CD4-positive, alpha-beta memory T cell (primary cell): ENCODE measurements at regions of chr9 and their contacts with region 1.

Region 1: DNA sequence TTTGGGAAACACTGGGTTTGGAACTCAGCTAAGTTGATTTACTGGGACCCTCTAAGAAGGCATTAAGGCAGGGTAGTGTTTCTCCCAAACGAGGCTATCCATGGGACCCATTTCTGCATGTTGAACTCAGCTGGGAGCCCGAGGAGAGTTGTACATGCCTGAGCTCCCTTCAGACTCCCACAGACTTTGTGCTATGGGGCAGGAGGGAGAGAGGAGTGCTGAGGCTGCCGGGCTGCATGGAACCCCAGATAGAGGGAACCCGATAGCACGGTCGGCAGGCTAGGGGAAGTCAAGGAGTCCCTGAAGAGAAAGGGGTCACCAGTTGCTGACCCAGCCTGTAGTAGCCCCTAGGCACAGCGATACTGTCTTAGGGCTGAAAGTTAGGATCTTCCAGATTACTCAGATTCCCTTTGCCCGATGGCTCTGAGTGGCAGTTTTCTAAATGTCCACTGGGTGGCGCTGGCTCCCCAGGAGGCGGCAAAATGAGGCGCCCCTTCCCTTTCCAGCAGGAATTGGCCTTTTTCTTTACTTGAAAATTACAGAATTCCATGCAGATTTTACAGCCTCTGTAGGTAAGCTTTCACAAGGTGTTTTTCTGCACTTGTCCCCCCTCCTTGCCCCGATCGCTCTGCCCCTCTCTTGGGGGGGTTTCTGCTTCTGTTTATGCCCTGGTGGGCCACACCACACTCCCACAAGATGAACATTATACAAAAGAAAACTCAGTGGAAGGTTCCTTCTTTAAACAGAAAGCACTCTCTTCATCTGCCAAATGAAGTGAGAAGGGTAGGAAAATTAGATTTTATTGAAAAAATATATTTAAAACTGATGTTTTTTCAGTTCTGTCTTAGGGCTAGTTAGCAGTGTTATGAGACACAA is 17.8 kb downstream of the NANS start:
- DNase-seq: peak; percentile 60 to 72 (median 62)
- H3K4me3 ChIP-seq: no peak overlapping the region
- H3K4me3 Mint-ChIP-seq: peak overlapping the region; percentile 52 to 89 (median 71)
- H3K27ac ChIP-seq: peak overlapping the region; percentile 67
- H3K27ac Mint-ChIP-seq: peak overlapping the region; percentile 92 to 98 (median 96)
- H3K4me1 ChIP-seq: peaks cover 31% of the 10 kb centered on the region
- H3K4me1 Mint-ChIP-seq: peaks cover 24 to 43% (median 29%) of the 10 kb centered on the region in 4 donors
- H3K27me3 ChIP-seq: no peaks in the 10 kb centered on the region
- H3K27me3 Mint-ChIP-seq: no peaks in the 10 kb centered on the region

Region 2: GRCh38 chr9:98095431-98095830 is 21.1 kb after region 1 on chr9:
- CTCF ChIA-PET with region 1: interaction called, 23 read pairs
- POLR2A ChIA-PET with region 1: interaction called, 7 read pairs
- intact Hi-C with region 1: no loop called
- DNase-seq: no peak
- H3K4me3 ChIP-seq: no peak overlapping the region
- H3K4me3 Mint-ChIP-seq: peak overlapping the region in 2 of 8 donors; percentile 17 to 52
- H3K27ac ChIP-seq: no peak overlapping the region
- H3K27ac Mint-ChIP-seq: peak overlapping the region in 6 of 7 donors; percentile 41 to 91 (median 80)
- H3K4me1 ChIP-seq: peaks cover 67% of the 10 kb centered on the region
- H3K4me1 Mint-ChIP-seq: peaks cover 46 to 82% (median 66%) of the 10 kb centered on the region in 4 donors
- H3K27me3 ChIP-seq: no peaks in the 10 kb centered on the region
- H3K27me3 Mint-ChIP-seq: no peaks in the 10 kb centered on the region

Region 3: GRCh38 chr9:98118640-98119601 is 44.6 kb after region 1 on chr9 and contains the start of gene TRIM14:
- CTCF ChIA-PET with region 1: interaction called, 54 read pairs
- POLR2A ChIA-PET with region 1: interaction called, 36 read pairs
- intact Hi-C with region 1: loop called (anchors 1 kb)
- DNase-seq: peak; percentile 35 to 71 (median 45)
- H3K4me3 ChIP-seq: peak within 1 kb of the TSS; percentile 70 to 87
- H3K4me3 Mint-ChIP-seq: peak within 1 kb of the TSS; percentile 87 to 96 (median 92)
- H3K27ac ChIP-seq: peak within 1 kb of the TSS; percentile 92
- H3K27ac Mint-ChIP-seq: peak within 1 kb of the TSS; percentile 89 to 99 (median 95)
- H3K4me1 ChIP-seq: peaks cover 70% of the 10 kb centered on the region
- H3K4me1 Mint-ChIP-seq: peaks cover 37 to 65% (median 50%) of the 10 kb centered on the region in 4 donors
- H3K27me3 ChIP-seq: no peaks in the 10 kb centered on the region
- H3K27me3 Mint-ChIP-seq: no peaks in the 10 kb centered on the region
- total RNA-seq, gene TRIM14: 86.1 to 86.2 TPM

Region 4: DNA sequence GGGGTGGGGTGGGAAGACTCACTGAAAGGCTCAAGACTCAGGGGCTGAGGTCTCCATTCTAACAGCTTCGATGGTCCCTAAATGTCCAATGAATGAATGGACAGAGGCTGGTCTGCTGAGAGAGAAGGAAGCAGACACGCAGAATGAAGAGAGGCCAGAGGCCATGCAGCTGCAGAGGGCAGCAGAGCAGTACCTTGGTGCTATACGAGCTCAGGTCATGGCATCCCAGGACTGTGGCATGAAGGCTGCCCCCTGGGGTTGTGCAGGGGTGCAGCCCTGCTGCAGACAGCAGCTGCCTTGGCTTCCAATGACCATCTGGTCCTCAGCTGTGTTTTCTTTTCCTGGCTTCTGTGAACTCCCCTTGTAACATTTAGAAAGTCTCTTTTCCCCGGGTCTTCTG is 133.3 kb after region 1 on chr9:
- CTCF ChIA-PET with region 1: interaction called, 16 read pairs
- POLR2A ChIA-PET with region 1: interaction called, 5 read pairs
- intact Hi-C with region 1: loop called (anchors 1 kb)
- DNase-seq: no peak
- H3K4me3 ChIP-seq: no peak overlapping the region
- H3K4me3 Mint-ChIP-seq: no peak overlapping the region
- H3K27ac ChIP-seq: no peak overlapping the region
- H3K27ac Mint-ChIP-seq: peak overlapping the region in 3 of 7 donors; percentile 24 to 49 (median 36)
- H3K4me1 ChIP-seq: peaks cover 8% of the 10 kb centered on the region
- H3K4me1 Mint-ChIP-seq: peaks cover 0 to 11% (median 6%) of the 10 kb centered on the region in 4 donors
- H3K27me3 ChIP-seq: no peaks in the 10 kb centered on the region
- H3K27me3 Mint-ChIP-seq: no peaks in the 10 kb centered on the region

Region 5: DNA sequence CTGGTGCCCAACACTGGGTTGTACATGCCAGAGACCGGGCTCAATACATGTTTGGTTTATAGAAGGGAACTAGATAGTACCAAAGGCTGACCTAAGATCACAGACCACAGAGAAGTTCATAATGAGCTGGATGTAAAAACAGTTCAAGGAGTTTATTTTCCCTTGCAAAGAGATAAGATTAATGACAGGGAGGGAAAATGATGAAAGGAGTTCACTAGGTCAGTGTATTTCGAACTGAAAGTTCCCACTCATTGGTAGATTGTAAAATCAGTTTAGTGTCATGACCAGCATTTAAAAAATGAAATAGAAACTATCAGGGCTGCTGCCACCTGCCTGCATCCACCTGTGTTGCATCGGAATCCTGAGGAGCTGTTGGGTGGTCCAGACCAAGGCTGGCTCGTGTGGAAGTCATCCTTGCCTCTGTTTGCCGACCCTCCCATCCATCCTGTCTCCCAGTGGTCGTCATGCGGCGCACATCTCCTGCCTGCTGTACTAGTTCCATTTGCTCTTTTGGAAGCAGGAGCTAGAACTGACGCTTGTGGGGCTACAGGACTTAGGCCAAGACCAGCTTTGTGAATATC is 160.0 kb after region 1 on chr9:
- CTCF ChIA-PET with region 1: interaction called, 13 read pairs
- POLR2A ChIA-PET with region 1: no interaction called
- intact Hi-C with region 1: no loop called
- DNase-seq: no peak
- H3K4me3 ChIP-seq: no peak overlapping the region
- H3K4me3 Mint-ChIP-seq: no peak overlapping the region
- H3K27ac ChIP-seq: no peak overlapping the region
- H3K27ac Mint-ChIP-seq: no peak overlapping the region
- H3K4me1 ChIP-seq: no peaks in the 10 kb centered on the region
- H3K4me1 Mint-ChIP-seq: peaks cover 0 to 3% (median 0%) of the 10 kb centered on the region in 4 donors
- H3K27me3 ChIP-seq: no peaks in the 10 kb centered on the region
- H3K27me3 Mint-ChIP-seq: no peaks in the 10 kb centered on the region

Region 6: DNA sequence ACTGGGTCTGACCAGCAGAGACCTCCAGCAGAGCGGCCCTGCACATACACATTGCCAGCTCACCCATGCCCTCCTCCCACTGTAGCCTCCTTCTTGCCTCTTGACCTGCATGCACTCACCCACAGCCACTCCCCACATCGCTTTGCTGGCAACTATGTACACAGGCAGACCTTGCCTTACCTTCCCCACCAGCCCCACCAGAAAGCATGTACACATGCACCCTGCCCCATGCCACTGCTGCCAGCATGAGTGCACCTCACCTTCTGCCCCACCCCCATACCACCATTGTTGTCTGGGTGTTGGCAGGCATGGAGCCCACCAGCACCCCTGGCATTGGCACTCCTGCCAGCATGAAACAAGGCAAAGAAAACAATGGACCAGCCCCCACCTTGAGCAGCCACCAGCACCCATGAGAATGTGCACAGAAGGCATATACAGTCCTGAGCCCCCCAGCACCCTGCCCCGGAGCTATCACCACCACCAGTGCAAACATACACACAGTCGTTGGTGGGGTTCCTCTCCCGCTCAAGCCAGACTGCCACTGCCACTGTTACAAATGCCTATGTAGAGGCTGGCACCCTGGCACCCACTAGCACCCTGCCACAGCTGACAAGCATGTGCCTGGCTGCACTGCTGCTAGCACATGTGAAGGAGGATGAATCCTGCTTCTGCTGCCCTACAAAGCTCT is 1576.0 kb after region 1 on chr9:
- CTCF ChIA-PET with region 1: no interaction called
- POLR2A ChIA-PET with region 1: no interaction called
- intact Hi-C with region 1: no loop called
- DNase-seq: no peak
- H3K4me3 ChIP-seq: no peak overlapping the region
- H3K4me3 Mint-ChIP-seq: no peak overlapping the region
- H3K27ac ChIP-seq: no peak overlapping the region
- H3K27ac Mint-ChIP-seq: no peak overlapping the region
- H3K4me1 ChIP-seq: no peaks in the 10 kb centered on the region
- H3K4me1 Mint-ChIP-seq: no peaks in the 10 kb centered on the region
- H3K27me3 ChIP-seq: no peaks in the 10 kb centered on the region
- H3K27me3 Mint-ChIP-seq: peaks cover 6 to 12% of the 10 kb centered on the region in 2 donors